ENCODE measurements at regions of chr17 and their contacts with region 1.

Region 1: GRCh38 chr17:17001874-17002520 is 30.1 kb upstream of the TNFRSF13B start:
- DNase-seq: peak; percentile 87 to 89
- H3K4me3 ChIP-seq: no peak overlapping the region
- H3K27ac ChIP-seq: no peak overlapping the region
- H3K4me1 ChIP-seq: peaks cover 5 to 6% of the 10 kb centered on the region in 2 donors
- H3K27me3 ChIP-seq: no peaks in the 10 kb centered on the region
- CTCF ChIP-seq: peak in 5 of 6 experiments; percentile 83 to 98 (median 95)
- POLR2A ChIP-seq: no peak

Region 2: DNA sequence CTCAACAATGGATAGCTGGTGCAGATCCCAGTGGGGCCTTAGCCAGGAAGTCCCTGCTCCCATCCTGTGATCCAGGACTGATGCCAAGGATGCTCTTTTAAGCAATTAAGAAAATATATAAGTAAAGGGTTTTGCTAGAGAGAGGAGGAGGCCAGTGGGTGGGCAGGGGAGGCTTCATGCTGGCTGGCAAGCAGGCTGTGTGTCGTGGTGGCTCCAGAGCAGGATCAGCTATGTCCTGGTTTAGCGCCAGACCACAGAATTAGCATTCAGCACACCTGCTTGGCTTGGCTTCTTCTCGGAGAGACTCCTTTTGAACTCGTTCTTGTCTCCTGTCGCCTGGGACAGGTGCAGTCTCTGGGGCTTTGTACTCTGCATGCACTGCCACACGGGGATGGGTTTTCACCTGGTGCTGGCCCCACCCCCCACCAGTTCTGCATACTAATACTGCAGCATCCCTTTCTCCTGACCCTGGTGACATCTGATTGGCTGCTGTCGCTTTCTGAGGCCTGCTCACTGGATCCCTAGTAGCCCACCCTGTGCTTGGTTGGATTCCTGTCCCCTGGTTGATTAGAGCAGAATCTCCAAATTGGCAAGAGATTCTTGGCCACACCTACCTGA is 138.1 kb after region 1 on chr17:
- intact Hi-C with region 1: loop called (anchors 10 kb)
- DNase-seq: no peak
- H3K4me3 ChIP-seq: no peak overlapping the region
- H3K27ac ChIP-seq: no peak overlapping the region
- H3K4me1 ChIP-seq: no peaks in the 10 kb centered on the region
- H3K27me3 ChIP-seq: no peaks in the 10 kb centered on the region
- CTCF ChIP-seq: no peak
- POLR2A ChIP-seq: no peak

Region 3: GRCh38 chr17:17239832-17240231 is 237.8 kb after region 1 on chr17:
- intact Hi-C with region 1: loop called (anchors 10 kb)
- DNase-seq: no peak
- H3K4me3 ChIP-seq: no peak overlapping the region
- H3K27ac ChIP-seq: no peak overlapping the region
- H3K4me1 ChIP-seq: peaks cover 16% of the 10 kb centered on the region in 2 donors
- H3K27me3 ChIP-seq: no peaks in the 10 kb centered on the region
- CTCF ChIP-seq: no peak
- POLR2A ChIP-seq: no peak

Region 4: DNA sequence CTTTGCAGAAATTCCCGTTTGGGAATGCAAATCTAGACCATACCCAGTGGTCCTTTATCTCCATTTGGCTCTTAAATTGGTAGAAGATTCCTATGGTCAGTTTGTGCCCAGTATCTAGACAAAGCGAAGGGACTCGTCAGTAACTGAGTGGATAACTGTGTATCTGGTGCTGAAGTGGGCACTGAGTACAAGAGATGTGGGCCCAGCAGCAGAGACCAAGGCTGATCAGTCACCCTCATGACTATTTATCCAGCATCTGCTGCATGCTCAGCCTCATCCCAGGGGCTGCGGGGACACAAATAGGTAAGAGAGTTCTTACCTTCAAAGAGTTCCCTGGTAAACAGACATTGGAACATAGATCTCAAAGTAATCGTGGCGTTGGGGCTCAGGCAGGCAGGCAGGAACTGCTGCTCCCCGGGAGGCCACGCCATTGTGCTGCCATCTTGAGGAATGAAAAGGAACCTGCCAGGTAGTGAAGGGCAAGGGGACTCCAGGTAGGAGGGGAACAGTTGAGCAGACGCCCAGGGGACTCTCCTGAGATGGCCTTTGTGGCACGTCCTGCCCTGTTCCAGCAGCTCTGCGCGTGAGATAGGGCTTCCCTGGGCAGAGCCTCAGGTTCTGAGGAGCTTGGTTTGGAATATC is 311.5 kb after region 1 on chr17:
- intact Hi-C with region 1: loop called (anchors 5 kb)
- DNase-seq: peak; percentile 62 to 75
- H3K4me3 ChIP-seq: no peak overlapping the region
- H3K27ac ChIP-seq: no peak overlapping the region
- H3K4me1 ChIP-seq: no peaks in the 10 kb centered on the region
- H3K27me3 ChIP-seq: no peaks in the 10 kb centered on the region
- CTCF ChIP-seq: peak; percentile 39 to 74 (median 66)
- POLR2A ChIP-seq: no peak

Measured in thyroid gland (tissue), 4 donors.